Activated naive CD4-positive, alpha-beta T cell treated with anti-CD3 and anti-CD28 coated beads for 36 hours (primary cell): ENCODE measurements at regions of chr13 and their contacts with region 1.

Region 1: GRCh38 chr13:62663767-62664166 is 1248.1 kb upstream of the PCDH20 start:
- DNase-seq: no peak
- H3K4me3 Mint-ChIP-seq: no peak overlapping the region
- H3K27ac Mint-ChIP-seq: no peak overlapping the region
- H3K4me1 Mint-ChIP-seq: no peaks in the 10 kb centered on the region
- H3K27me3 Mint-ChIP-seq: no peaks in the 10 kb centered on the region

Region 2: GRCh38 chr13:62653371-62653770 is 10.4 kb before region 1 on chr13:
- CTCF ChIA-PET with region 1: no interaction called
- intact Hi-C with region 1: no loop called
- DNase-seq: no peak
- H3K4me3 Mint-ChIP-seq: no peak overlapping the region
- H3K27ac Mint-ChIP-seq: no peak overlapping the region
- H3K4me1 Mint-ChIP-seq: no peaks in the 10 kb centered on the region
- H3K27me3 Mint-ChIP-seq: no peaks in the 10 kb centered on the region

Region 3: DNA sequence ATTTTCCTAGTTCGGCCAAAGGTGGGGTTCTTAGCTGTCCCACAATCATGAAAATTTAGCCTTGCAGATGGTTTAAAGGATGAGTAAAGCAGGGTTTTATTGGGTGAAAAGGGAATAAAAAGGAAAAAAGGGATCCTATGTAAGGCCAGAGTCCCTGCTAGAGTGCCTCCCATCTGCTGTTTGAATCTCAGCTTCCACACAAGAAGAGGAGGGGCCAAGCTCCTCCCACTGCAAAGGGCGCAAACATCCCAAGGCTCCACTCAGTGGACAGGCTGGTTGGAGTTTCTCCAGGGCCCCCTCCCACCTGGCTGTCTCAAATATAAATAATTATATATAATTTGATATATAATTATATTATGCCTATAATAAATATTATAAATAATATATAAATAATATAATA is 24.0 kb after region 1 on chr13:
- CTCF ChIA-PET with region 1: no interaction called
- intact Hi-C with region 1: loop called (anchors 2 kb)
- DNase-seq: peak; percentile 4
- H3K4me3 Mint-ChIP-seq: no peak overlapping the region
- H3K27ac Mint-ChIP-seq: no peak overlapping the region
- H3K4me1 Mint-ChIP-seq: no peaks in the 10 kb centered on the region
- H3K27me3 Mint-ChIP-seq: no peaks in the 10 kb centered on the region